CD4-positive, alpha-beta memory T cell (primary cell): ENCODE measurements at regions of chrX and their contacts with region 1.

Region 1: DNA sequence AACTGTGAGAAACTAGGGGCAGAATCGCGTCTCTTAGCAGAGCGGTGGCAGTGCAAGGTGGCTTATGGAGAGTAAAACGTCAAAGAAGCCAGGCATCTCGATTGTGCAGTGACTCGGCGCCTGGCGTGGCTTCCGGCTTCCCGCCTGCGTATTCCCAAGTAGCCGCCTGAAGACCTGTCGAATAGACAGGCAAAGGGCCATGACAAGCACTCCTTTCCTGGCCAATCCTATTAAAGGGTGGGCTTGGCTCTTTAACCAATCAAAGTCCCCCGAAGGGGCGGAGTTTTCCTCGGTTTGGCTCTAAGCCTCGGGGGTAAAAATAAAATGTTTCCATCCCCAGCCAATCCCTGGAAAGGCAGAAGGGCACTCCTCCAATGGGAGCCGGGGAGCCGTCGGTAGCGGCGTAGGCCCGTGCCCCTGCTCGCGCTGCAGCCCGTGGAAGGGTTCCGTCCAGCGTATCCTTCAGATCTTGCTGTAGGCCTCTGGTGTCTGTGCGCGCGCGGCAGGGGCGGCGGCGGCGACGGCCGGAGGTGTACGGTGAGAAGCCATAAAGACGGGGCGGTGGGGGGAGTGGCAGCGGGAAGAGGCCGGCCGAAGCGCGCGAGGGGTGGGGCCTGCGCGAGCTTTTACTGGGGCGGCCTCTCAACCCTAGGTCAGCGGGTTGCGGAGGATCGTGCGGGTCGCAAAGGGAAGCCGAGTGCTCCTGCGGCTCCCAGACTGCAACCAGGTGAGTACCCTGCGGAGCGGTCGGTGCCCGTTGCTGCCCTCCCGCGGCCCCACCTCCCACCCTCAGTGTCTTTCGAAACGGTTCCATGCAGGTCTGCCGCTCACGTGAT is at the start of gene KANTR:
- DNase-seq: peak; percentile 83 to 92 (median 84)
- H3K4me3 ChIP-seq: peak within 1 kb of the TSS; percentile 29 to 58
- H3K4me3 Mint-ChIP-seq: peak within 1 kb of the TSS; percentile 84 to 93 (median 89)
- H3K27ac ChIP-seq: peak within 1 kb of the TSS; percentile 55
- H3K27ac Mint-ChIP-seq: peak within 1 kb of the TSS; percentile 87 to 92 (median 91)
- H3K4me1 ChIP-seq: peaks cover 9% of the 10 kb centered on the region
- H3K4me1 Mint-ChIP-seq: peaks cover 7 to 35% (median 19%) of the 10 kb centered on the region in 4 donors
- H3K27me3 ChIP-seq: no peaks in the 10 kb centered on the region
- H3K27me3 Mint-ChIP-seq: no peaks in the 10 kb centered on the region
- total RNA-seq, gene KANTR: 19.9 to 23.4 TPM

Region 2: DNA sequence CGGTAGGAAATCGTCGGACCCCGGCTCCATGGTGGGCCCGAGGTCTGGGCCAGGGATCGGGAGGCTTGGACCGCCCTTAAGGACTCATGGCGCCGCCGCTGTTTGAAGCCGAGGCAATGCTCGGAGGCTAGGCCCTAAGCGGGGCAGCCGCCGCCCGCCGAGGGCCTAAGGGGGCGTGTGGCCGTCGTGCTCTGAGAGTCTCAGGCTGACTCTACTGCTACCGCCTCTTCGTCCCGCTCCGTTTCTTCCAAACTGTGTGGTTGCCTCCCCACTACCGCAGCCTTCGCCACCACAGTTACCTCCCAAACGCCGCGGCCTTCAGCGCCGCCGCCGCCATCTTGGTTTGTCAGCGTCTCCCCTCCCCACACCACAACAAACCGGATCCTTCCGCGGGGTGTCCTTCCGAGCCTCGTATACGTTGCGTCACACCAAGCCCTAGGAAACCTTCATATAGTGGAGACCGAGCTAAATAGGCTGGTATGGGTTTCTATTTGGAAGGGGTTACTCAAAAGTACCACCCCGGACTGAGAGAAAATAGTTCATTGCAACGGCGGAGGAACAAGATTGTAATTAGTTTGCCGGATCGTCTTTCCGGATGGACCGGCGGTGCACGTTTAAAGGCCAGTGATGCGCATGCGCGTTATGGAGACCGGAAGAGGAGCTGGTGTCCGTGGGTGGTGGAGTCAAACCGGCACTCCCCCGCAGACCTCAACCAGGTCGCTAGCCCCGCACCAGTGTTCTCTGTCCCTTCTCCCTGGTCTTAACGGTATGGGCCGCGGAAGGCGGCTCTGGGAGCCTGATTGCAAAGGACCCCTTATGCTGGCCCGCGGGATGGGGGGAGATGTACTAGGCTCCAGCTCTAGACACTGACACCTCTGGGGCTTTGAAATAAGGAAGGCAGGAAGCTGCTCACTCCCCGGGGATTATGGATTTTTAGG is 131.2 kb after region 1 on chrX and contains the start of gene KDM5C:
- CTCF ChIA-PET with region 1: no interaction called
- POLR2A ChIA-PET with region 1: interaction called, 3 read pairs
- intact Hi-C with region 1: loop called (anchors 5 kb)
- DNase-seq: peak; percentile 90 to 96 (median 96)
- H3K4me3 ChIP-seq: peak within 1 kb of the TSS; percentile 65 to 88
- H3K4me3 Mint-ChIP-seq: peak within 1 kb of the TSS; percentile 97 to 100 (median 99)
- H3K27ac ChIP-seq: peak within 1 kb of the TSS; percentile 97
- H3K27ac Mint-ChIP-seq: peak within 1 kb of the TSS; percentile 98 to 100 (median 99)
- H3K4me1 ChIP-seq: peaks cover 35% of the 10 kb centered on the region
- H3K4me1 Mint-ChIP-seq: peaks cover 24 to 52% (median 39%) of the 10 kb centered on the region in 4 donors
- H3K27me3 ChIP-seq: no peaks in the 10 kb centered on the region
- H3K27me3 Mint-ChIP-seq: peaks cover 0 to 2% of the 10 kb centered on the region in 2 donors
- total RNA-seq, gene KDM5C: 120 to 127 TPM